Activated CD8-positive, alpha-beta T cell treated with anti-CD3 and anti-CD28 coated beads for 36 hours (primary cell): ENCODE measurements at regions of chr14 and their contacts with region 1.

Region 1: DNA sequence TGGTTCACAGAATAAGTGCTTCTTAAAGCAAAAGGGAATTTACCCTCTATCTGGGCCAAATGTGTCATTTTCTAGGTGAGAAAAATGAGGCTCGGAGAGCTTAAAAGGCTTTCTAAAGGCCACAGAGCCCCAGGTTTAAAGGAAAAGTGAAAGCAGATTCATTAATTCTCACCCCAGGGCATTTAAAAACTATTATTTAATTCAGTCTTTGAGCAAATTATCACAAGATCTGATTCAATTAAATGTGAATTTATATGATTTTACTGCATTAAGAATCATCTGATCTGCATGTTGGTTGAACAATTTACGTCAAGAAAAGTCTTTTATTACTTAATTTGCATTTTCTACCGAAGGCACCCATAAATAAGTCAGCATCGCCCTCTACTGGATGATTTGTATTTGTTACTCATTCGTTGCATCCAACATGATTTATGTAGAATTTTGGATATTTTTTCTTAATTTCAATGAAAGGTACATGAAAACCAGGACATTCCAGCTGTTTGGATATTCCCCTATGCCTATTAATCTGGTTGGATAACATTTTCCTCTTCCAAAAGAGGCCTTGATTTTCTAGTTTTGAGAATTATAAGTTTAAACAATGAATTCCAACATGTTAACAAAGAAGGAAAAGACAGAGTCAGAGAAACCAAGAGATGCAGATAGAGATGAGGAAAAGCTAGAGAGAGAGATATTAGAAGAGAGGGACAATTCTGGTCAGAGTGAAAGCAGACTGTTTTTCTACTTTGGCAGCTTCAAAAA is 19.1 kb upstream of the DHRS7 start:
- DNase-seq: peak; percentile 18
- ATAC-seq: peak; percentile 89
- H3K4me3 Mint-ChIP-seq: peak overlapping the region; percentile 72
- H3K27ac Mint-ChIP-seq: peak overlapping the region; percentile 91
- H3K4me1 Mint-ChIP-seq: peaks cover 20% of the 10 kb centered on the region
- H3K27me3 Mint-ChIP-seq: no peaks in the 10 kb centered on the region
- CTCF ChIP-seq: peak; percentile 93

Region 2: GRCh38 chr14:59964251-59965007 is 219.9 kb before region 1 on chr14:
- CTCF ChIA-PET with region 1: interaction called, 124 read pairs
- POLR2A ChIA-PET with region 1: no interaction called
- intact Hi-C with region 1: loop called (anchors 2 kb)
- DNase-seq: no peak
- ATAC-seq: peak; percentile 19
- H3K4me3 Mint-ChIP-seq: peak overlapping the region; percentile 75
- H3K27ac Mint-ChIP-seq: peak overlapping the region; percentile 96
- H3K4me1 Mint-ChIP-seq: peaks cover 26% of the 10 kb centered on the region
- H3K27me3 Mint-ChIP-seq: peaks cover 4% of the 10 kb centered on the region
- CTCF ChIP-seq: no peak

Region 3: GRCh38 chr14:60091550-60092530 is 92.5 kb before region 1 on chr14 and contains the start of gene PCNX4:
- CTCF ChIA-PET with region 1: interaction called, 31 read pairs
- POLR2A ChIA-PET with region 1: interaction called, 4 read pairs
- intact Hi-C with region 1: no loop called
- DNase-seq: peak; percentile 97
- ATAC-seq: peak; percentile 93
- H3K4me3 Mint-ChIP-seq: peak within 1 kb of the TSS; percentile 100
- H3K27ac Mint-ChIP-seq: peak within 1 kb of the TSS; percentile 98
- H3K4me1 Mint-ChIP-seq: peaks cover 30% of the 10 kb centered on the region
- H3K27me3 Mint-ChIP-seq: no peaks in the 10 kb centered on the region
- CTCF ChIP-seq: no peak
- total RNA-seq, gene PCNX4: 28.2 to 30.0 TPM

Region 4: DNA sequence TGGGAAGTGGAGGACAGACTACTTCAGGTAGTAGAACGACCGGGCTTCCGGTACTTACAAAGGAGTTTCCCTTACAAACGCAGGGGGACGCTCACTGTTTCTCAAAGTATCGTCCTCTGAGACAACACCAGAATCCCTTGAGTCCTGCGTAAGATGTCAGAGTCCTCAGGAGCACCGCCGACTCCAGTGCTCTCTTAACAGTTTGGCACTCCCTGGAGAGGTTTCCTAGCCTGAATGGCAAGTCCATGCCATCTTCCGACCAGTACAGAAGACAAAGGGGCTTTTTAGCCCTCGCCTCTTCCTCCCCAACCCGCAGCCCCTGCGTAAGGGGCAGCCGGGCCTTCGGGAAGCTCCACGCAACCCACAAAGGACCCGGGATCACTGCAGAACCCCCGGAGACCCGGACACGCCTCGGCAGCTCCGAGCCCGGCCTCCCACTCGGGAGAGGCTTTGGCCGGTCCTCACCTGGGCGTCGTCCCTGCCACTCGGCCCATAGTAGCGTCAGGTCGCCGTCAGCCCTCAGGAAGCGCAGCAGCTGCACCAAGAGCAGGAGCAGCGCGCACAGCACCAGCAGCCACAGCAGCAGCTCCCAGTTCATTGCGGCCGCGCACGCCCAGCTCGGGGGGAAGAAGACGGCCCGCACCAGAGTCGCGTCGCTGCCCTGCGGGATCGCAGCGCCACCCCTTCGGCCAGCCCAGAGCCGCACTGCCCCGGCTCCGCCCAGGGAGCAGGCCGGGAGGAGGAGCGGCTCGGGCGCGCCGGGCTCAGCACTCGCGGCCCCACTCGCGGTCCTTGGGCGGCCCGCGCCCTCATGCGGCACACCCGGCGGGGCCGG is 19.4 kb before region 1 on chr14 and contains the start of gene DHRS7:
- CTCF ChIA-PET with region 1: interaction called, 53 read pairs
- POLR2A ChIA-PET with region 1: interaction called, 6 read pairs
- intact Hi-C with region 1: no loop called
- DNase-seq: peak; percentile 73
- ATAC-seq: peak; percentile 86
- H3K4me3 Mint-ChIP-seq: peak within 1 kb of the TSS; percentile 88
- H3K27ac Mint-ChIP-seq: peak within 1 kb of the TSS; percentile 96
- H3K4me1 Mint-ChIP-seq: peaks cover 37% of the 10 kb centered on the region
- H3K27me3 Mint-ChIP-seq: no peaks in the 10 kb centered on the region
- CTCF ChIP-seq: no peak
- total RNA-seq, gene DHRS7: 46.4 to 46.6 TPM

Region 5: DNA sequence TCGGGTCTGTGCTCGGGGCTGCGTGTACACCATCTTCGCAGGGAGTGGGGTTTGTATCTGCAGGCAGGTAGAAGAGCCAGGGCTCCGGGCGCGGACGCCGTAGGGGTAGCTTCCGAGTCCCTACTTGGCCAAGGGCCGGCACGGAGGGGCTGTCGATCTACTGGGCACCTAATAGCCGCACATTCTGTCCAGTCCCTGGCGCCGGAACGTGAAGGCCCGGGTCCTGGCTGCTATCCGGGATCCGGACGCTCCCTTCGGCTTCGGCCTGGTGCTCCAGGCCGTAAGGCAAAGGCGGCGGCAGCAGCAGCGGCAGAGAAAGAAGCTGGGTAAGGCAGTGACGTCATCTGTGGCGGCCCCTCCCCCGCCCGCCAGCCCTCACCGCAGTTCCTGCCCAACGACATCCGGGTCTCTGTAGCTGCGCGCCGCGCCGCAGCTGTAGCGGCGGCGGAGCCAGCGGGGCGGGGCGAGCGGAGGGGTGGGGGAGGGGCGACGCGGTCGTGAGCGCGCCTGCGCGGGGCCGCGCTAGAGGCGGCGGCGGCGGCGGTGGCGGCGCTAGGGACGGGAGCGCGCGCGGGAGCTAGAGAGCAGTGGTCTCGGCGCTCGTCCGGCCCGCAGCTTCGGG is 64.5 kb after region 1 on chr14 and contains the start of gene PPM1A:
- CTCF ChIA-PET with region 1: interaction called, 17 read pairs
- POLR2A ChIA-PET with region 1: interaction called, 6 read pairs
- intact Hi-C with region 1: no loop called
- DNase-seq: peak; percentile 96
- ATAC-seq: peak; percentile 76
- H3K4me3 Mint-ChIP-seq: peak within 1 kb of the TSS; percentile 90
- H3K27ac Mint-ChIP-seq: peak within 1 kb of the TSS; percentile 100
- H3K4me1 Mint-ChIP-seq: peaks cover 52% of the 10 kb centered on the region
- H3K27me3 Mint-ChIP-seq: no peaks in the 10 kb centered on the region
- CTCF ChIP-seq: no peak
- total RNA-seq, gene PPM1A: 40.0 to 40.5 TPM

Region 6: GRCh38 chr14:60331201-60332045 is 147.1 kb after region 1 on chr14:
- CTCF ChIA-PET with region 1: interaction called, 36 read pairs
- POLR2A ChIA-PET with region 1: no interaction called
- intact Hi-C with region 1: loop called (anchors 10 kb)
- DNase-seq: peak; percentile 92
- ATAC-seq: peak; percentile 83
- H3K4me3 Mint-ChIP-seq: peak overlapping the region; percentile 86
- H3K27ac Mint-ChIP-seq: peak overlapping the region; percentile 97
- H3K4me1 Mint-ChIP-seq: peaks cover 28% of the 10 kb centered on the region
- H3K27me3 Mint-ChIP-seq: peaks cover 23% of the 10 kb centered on the region
- CTCF ChIP-seq: peak; percentile 93

Region 7: DNA sequence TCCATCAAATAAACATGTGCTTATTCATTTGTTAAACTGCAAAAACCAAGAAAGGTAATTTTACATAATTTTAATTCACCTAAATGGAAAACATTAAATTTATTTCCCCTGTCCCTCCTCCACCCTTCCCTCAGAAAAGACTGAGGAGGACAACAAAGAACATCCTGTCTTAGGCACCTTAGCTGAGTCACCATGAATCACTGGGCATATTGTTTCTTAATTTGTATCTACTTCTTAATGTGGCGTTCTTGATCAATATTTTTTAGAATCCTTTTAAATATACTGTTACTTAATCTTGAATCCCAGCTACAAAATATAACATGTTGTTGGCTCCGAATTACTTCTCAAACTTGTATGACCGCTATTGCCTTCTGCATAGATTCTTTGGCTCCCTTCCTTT is 348.1 kb after region 1 on chr14:
- CTCF ChIA-PET with region 1: no interaction called
- POLR2A ChIA-PET with region 1: no interaction called
- intact Hi-C with region 1: no loop called
- DNase-seq: no peak
- ATAC-seq: no peak
- H3K4me3 Mint-ChIP-seq: no peak overlapping the region
- H3K27ac Mint-ChIP-seq: no peak overlapping the region
- H3K4me1 Mint-ChIP-seq: no peaks in the 10 kb centered on the region
- H3K27me3 Mint-ChIP-seq: peaks cover 21% of the 10 kb centered on the region
- CTCF ChIP-seq: no peak